Activated B cell treated with CpG ODN at 0.5 μM for 24 hours (primary cell): ENCODE measurements at regions of chr12 and their contacts with region 1.

Region 1: GRCh38 chr12:27534060-27534764 is 10.2 kb downstream of the PPFIBP1 start:
- DNase-seq: no peak
- ATAC-seq: peak; percentile 55
- H3K4me3 Mint-ChIP-seq: peak overlapping the region; percentile 39
- H3K27ac Mint-ChIP-seq: peak overlapping the region; percentile 43
- H3K4me1 Mint-ChIP-seq: peaks cover 63% of the 10 kb centered on the region
- H3K27me3 Mint-ChIP-seq: no peaks in the 10 kb centered on the region
- CTCF ChIP-seq: no peak

Region 2: DNA sequence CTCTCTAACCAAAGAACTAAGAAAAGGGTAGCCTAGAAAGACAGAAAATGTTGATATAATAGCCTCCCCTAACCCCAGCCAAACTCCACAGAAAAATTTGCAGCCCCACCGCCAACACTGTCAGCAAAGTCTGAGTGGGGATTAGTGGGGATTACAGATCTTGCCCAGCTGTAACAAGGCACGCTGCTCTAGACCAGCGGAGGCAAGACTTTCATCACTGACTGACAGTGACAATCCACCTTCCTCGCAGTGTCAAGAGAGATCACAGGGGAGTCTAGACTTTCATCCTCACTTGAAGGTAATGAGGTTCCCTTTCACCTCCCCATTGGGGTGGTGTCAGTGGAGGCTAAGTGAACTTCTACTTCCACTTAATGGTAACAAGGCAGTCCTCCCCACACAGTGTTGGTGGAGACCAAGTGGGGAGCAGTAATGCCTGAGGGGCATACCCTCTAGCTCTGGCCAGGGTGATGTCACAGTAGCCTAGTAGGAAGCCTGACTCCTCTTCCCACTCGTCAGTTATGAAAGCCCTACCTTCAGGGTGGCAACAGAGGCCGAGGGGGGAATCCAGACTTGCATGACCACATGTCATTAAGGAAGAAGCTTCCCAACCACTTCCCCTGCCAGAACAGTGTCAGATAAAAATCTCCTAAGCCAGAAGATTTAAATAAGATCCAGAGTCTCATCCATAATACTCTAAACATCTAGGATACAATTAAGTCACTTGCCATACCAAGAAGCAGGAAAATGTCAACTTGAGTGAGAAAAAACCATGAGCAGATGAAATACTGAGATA is 1667.4 kb before region 1 on chr12:
- CTCF ChIA-PET with region 1: no interaction called
- POLR2A ChIA-PET with region 1: interaction called, 12 read pairs
- intact Hi-C with region 1: no loop called
- DNase-seq: no peak
- ATAC-seq: no peak
- H3K4me3 Mint-ChIP-seq: no peak overlapping the region
- H3K27ac Mint-ChIP-seq: no peak overlapping the region
- H3K4me1 Mint-ChIP-seq: no peaks in the 10 kb centered on the region
- H3K27me3 Mint-ChIP-seq: peaks cover 7% of the 10 kb centered on the region
- CTCF ChIP-seq: no peak

Region 3: DNA sequence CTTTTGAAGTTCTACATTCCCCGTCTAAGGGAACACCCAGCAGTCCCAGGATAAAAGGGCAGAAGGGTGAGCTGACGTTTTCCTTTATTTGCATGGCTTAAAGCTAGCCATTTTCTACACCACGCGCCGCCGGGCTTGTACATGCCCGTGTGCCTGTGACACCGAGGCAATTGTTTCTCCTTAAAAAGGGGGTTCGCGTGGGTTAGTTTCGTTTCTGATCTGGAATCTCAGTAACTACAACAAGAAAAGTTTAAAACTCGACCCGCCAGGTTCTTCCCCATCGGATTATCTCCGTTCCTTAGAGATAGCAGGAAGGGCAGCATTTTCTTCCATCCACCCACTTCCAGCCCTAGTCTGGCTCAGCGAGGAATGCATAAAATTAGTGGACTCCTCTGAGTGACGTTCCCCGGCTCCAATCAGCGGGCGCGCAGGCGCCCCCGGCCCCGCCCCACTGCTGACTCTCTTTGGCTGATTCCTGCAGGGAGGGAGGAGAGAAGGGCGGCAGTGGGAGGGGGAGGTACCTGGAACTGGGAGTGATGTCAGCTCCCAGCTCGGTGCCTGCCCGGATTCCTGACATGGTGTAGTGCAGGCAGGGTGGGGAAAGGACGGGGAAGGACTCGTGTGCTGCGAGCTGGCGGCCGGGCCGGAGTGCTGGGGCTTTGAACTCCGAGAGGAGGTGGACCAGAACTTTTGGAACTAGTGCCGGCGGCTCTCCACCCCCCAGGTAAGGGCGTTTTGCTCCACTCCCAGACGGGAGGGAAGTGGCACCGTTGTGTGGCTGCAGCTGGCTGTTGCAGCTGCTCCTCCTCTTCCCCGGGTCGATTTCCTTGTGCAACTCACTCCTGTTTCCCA is 10.3 kb before region 1 on chr12 and contains the start of gene PPFIBP1:
- CTCF ChIA-PET with region 1: interaction called, 3 read pairs
- POLR2A ChIA-PET with region 1: interaction called, 13 read pairs
- intact Hi-C with region 1: loop called (anchors 1 kb)
- DNase-seq: peak; percentile 81
- ATAC-seq: peak; percentile 98
- H3K4me3 Mint-ChIP-seq: peak within 1 kb of the TSS; percentile 96
- H3K27ac Mint-ChIP-seq: peak within 1 kb of the TSS; percentile 93
- H3K4me1 Mint-ChIP-seq: peaks cover 23% of the 10 kb centered on the region
- H3K27me3 Mint-ChIP-seq: peaks cover 3% of the 10 kb centered on the region
- CTCF ChIP-seq: no peak
- total RNA-seq, gene PPFIBP1: 7.2 and 8.1 TPM in 2 replicates